Colonic mucosa (tissue), 4 donors: ENCODE measurements at regions of chr14 and their contacts with region 1.

Region 1: DNA sequence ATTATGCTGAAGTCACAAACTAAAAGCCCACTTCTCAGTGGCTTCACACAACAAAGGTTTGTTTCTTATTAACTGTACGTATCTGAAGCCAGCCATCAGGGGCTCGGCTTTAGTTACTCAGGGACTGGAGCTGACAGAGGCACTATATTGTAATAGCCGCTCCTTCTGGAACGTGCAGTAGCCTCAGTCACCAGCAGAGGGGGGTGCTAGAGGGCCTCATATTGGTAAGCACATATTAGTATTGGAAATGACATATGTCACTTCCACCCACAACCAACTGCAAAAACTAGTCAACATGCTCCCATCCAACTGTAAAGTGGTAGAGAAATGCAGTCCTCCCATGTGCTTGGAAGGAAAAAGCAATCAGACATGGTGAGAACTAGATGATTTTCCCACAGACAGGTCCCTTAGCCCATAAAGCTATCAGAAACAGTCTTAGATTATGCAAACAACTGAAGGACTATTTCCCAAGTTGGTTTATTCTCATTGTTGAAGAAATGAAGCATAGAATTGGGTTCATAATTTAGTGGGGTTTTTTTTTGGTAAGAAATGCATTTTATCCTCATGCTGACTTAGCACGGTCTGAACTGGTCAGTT is 183.6 kb upstream of the G2E3 start:
- DNase-seq: peak; percentile 70
- H3K4me3 ChIP-seq: no peak overlapping the region
- H3K27ac ChIP-seq: no peak overlapping the region
- H3K4me1 ChIP-seq: no peaks in the 10 kb centered on the region
- H3K27me3 ChIP-seq: no peaks in the 10 kb centered on the region
- CTCF ChIP-seq: peak; percentile 82

Region 2: GRCh38 chr14:30125322-30125979 is 249.9 kb before region 1 on chr14:
- intact Hi-C with region 1: no loop called
- DNase-seq: no peak
- H3K4me3 ChIP-seq: no peak overlapping the region
- H3K27ac ChIP-seq: no peak overlapping the region
- H3K4me1 ChIP-seq: no peaks in the 10 kb centered on the region
- H3K27me3 ChIP-seq: no peaks in the 10 kb centered on the region
- CTCF ChIP-seq: no peak

Region 3: DNA sequence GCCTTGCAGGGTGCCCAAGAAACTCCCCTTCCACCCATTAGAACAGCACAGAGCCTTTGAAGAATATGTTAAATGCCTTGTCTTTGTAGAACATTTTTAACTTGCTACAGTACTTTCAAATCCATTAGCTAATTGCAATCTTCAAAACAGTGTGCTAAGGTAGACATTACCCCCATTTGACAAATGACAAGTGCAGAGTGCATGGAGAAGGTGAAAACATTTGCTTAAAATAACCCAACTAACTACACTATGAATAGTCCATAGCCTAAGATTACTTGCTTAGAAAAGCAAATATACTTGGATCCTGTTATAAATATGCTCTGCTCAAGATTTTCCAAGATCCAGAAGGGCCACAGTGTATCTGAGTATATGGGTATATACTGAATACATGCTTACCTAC is 96.6 kb after region 1 on chr14:
- intact Hi-C with region 1: no loop called
- DNase-seq: no peak
- H3K4me3 ChIP-seq: no peak overlapping the region
- H3K27ac ChIP-seq: no peak overlapping the region
- H3K4me1 ChIP-seq: no peaks in the 10 kb centered on the region
- H3K27me3 ChIP-seq: no peaks in the 10 kb centered on the region
- CTCF ChIP-seq: no peak

Region 4: GRCh38 chr14:30521899-30522736 is 146.7 kb after region 1 on chr14:
- intact Hi-C with region 1: loop called (anchors 5 kb)
- DNase-seq: no peak
- H3K4me3 ChIP-seq: no peak overlapping the region
- H3K27ac ChIP-seq: no peak overlapping the region
- H3K4me1 ChIP-seq: no peaks in the 10 kb centered on the region
- H3K27me3 ChIP-seq: no peaks in the 10 kb centered on the region
- CTCF ChIP-seq: peak; percentile 59

Region 5: DNA sequence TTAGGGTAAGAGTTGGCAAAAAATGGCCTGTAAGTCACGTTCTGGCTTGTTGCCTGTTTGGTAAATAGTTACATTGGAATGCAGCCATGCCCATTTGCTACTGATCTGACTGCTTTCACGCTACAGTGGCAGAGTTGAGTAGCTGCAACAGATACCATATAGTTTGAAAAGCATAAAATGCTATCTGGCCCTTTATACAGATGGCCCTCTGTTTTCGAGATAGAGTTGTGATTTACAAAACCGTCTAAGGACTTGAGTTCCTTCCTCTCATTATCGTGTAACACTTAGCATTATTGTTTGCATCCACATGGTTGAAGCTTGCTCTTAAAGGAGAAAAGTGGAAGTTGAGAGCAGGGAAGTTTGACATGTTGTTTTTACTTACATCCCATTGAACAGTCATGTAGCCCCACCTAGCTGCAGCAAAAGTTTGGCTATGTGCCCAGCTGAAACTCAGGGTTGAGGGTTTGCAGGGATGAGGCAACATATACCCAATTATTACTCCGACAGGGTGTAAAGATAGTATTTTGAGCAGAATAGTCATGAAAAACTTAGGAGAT is 235.5 kb after region 1 on chr14:
- intact Hi-C with region 1: loop called (anchors 10 kb)
- DNase-seq: peak; percentile 78
- H3K4me3 ChIP-seq: no peak overlapping the region
- H3K27ac ChIP-seq: no peak overlapping the region
- H3K4me1 ChIP-seq: no peaks in the 10 kb centered on the region
- H3K27me3 ChIP-seq: no peaks in the 10 kb centered on the region
- CTCF ChIP-seq: peak; percentile 37

Region 6: DNA sequence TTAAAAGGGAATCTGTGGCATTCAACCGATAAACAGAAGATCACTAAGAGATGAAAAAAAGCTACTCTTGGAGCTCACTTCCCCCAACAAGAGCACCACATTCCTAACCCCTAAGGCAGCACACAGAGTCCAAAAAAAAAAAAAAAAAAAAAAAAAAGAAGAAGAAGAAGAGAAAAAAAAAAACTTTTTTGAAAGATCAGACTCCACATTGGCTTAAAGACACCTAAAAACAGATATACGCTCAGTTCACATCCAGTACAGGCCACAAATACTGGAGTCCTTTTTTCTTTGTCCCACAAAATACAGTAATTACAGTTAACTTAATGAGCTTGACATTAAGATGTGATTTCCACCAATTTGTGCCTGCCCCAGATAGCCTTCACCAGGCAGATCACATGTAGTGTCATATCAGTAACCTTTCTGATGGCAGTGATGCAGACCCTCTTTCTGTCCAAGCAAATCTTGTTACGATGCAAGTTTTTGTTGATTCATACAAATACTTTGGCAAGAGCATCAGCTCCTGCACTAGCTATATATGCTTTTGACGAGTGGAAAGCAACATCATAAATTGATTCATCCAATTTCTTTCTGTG is 519.6 kb after region 1 on chr14:
- intact Hi-C with region 1: no loop called
- DNase-seq: no peak
- H3K4me3 ChIP-seq: no peak overlapping the region
- H3K27ac ChIP-seq: no peak overlapping the region
- H3K4me1 ChIP-seq: no peaks in the 10 kb centered on the region
- H3K27me3 ChIP-seq: no peaks in the 10 kb centered on the region
- CTCF ChIP-seq: no peak

Region 7: GRCh38 chr14:31090883-31091764 is 715.7 kb after region 1 on chr14:
- intact Hi-C with region 1: no loop called
- DNase-seq: peak; percentile 52
- H3K4me3 ChIP-seq: no peak overlapping the region
- H3K27ac ChIP-seq: peak overlapping the region; percentile 36
- H3K4me1 ChIP-seq: peaks cover 3% of the 10 kb centered on the region
- H3K27me3 ChIP-seq: no peaks in the 10 kb centered on the region
- CTCF ChIP-seq: no peak